BJ (cell line): ENCODE measurements at regions of chr17 and their contacts with region 1.

Region 1: GRCh38 chr17:40531051-40531991 is 29.9 kb upstream of the TNS4 start:
- DNase-seq: no peak
- H3K4me3 ChIP-seq: no peak overlapping the region
- H3K27me3 ChIP-seq: no peaks in the 10 kb centered on the region
- CTCF ChIP-seq: no peak

Region 2: DNA sequence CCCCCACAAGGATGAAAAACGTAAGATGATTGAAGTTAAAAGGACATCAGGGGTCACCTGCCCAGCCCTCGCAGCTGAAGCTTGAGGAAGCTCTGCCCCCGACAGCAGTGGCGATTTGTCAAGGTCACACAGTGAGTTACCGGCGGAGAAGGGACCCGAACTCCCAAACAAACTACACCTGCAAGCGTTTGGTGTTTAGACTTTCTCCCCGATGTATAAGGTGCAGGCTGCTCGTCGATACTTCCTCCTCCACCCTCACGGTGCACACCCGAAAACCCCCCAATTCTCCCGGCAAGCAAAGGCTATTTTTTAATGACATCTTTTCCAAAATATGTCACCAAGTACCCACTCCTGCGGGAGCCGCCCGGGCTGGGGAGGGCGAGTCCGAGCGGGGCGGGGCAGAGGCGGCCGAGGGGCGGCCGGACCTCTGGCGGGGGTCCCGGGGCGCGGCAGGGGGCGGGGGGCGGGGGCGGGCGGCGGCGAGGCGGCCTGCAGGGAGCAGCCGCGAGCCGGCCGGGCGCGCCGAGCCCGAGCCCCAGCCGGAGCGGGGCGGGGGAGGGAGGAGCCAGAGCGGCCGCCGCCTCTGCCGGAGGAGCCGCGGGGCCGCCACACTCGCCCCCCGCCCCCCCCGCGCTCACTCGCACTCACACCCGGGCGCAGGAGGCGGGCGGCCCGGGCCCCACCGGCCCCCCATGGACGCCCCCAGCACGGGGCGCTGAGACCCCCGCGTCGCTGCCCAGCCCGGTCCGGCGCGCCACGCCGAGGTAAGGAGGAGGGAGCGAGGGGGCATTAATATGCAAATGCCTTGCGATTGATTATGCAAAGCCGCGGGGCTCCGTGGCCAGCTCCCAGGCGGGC is 468.8 kb before region 1 on chr17 and contains the start of gene THRA:
- CTCF ChIA-PET with region 1: no interaction called
- POLR2A ChIA-PET with region 1: no interaction called
- DNase-seq: no peak
- H3K4me3 ChIP-seq: peak within 1 kb of the TSS; percentile 97
- H3K27me3 ChIP-seq: no peaks in the 10 kb centered on the region
- CTCF ChIP-seq: no peak
- polyA plus RNA-seq, gene THRA: 32.1 and 43.3 TPM in 2 replicates

Region 3: GRCh38 chr17:40399185-40399584 is 132.1 kb before region 1 on chr17:
- CTCF ChIA-PET with region 1: interaction called, 10 read pairs
- POLR2A ChIA-PET with region 1: no interaction called
- DNase-seq: peak; percentile 5
- H3K4me3 ChIP-seq: no peak overlapping the region
- H3K27me3 ChIP-seq: no peaks in the 10 kb centered on the region
- CTCF ChIP-seq: peak; percentile 58

Region 4: GRCh38 chr17:40433551-40434415 is 97.5 kb before region 1 on chr17:
- CTCF ChIA-PET with region 1: interaction called, 18 read pairs
- POLR2A ChIA-PET with region 1: interaction called, 8 read pairs
- DNase-seq: no peak
- H3K4me3 ChIP-seq: no peak overlapping the region
- H3K27me3 ChIP-seq: peaks cover 3% of the 10 kb centered on the region; the same call in 1 of the 2 replicates
- CTCF ChIP-seq: peak; percentile 59

Region 5: DNA sequence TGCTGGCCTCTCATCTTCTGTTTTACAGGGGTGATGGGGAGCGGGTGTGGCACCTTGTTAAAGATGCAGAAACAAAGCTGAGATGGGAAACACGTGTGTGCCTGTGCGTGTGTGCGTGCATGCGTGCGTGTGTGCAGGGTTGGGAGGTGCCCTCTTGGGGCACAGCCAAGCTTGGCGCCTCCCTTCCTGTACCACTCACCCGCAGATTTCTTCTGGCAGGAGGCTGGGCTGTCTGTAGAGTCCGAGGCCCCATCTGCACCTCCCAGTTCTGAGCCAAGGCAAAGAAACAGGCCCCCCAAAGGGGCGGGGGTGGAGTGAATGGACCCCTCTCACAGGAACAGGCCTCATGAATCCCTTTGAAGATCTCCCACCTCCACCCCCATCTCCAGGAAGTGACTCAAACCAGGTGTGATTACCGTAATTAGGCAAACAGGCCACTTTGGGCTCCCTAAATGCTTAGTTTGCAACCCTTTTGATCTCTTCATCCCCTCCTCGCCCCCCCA is 50.8 kb before region 1 on chr17:
- CTCF ChIA-PET with region 1: interaction called, 98 read pairs
- POLR2A ChIA-PET with region 1: interaction called, 4 read pairs
- DNase-seq: peak; percentile 47
- H3K4me3 ChIP-seq: no peak overlapping the region
- H3K27me3 ChIP-seq: no peaks in the 10 kb centered on the region
- CTCF ChIP-seq: no peak

Region 6: DNA sequence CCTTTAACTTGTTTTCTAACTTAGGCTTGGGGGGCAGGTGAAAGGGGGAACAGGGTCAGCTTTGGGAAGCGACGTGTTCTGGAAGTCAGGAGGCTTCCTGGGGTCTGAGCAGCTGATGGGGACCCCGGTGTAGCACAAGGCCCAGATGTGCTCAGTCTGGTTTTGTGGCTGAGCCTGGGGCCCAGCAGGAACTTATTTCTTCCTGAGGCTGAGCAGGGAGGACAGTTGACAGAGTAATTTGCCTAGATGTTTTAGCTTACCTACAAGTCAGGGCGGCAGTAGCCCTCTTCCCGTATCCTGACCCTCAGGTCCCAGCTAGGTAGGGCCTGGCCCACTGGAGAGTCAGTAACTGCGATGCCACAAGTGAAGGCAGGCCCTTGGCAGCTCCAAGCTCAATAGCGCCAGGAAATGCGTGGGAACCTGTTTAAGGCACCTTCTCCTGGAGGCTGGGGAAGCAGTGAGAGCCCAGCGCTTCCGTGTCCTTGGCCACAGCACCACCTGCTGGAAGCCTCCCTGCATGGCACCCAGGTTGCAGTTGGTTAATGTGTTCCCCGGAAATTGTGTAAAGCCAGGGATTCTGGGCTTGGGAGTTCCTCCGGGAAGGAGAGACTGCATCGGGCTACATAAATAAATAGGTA is 28.8 kb after region 1 on chr17:
- CTCF ChIA-PET with region 1: interaction called, 382 read pairs
- POLR2A ChIA-PET with region 1: interaction called, 5 read pairs
- DNase-seq: peak; percentile 62
- H3K4me3 ChIP-seq: no peak overlapping the region
- H3K27me3 ChIP-seq: peaks cover 3% of the 10 kb centered on the region
- CTCF ChIP-seq: peak; percentile 99

Region 7: GRCh38 chr17:40576225-40576651 is 44.9 kb after region 1 on chr17:
- CTCF ChIA-PET with region 1: no interaction called
- POLR2A ChIA-PET with region 1: no interaction called
- DNase-seq: no peak
- H3K4me3 ChIP-seq: no peak overlapping the region
- H3K27me3 ChIP-seq: peaks cover 4% of the 10 kb centered on the region; the same call in 1 of the 2 replicates
- CTCF ChIP-seq: no peak